ENCODE measurements at regions of chr1 and their contacts with region 1.

Region 1: GRCh38 chr1:175823406-175823805 is 80.0 kb upstream of the TNR start:
- DNase-seq: no peak
- H3K4me3 ChIP-seq: no peak overlapping the region
- H3K27ac ChIP-seq: no peak overlapping the region
- H3K4me1 ChIP-seq: no peaks in the 10 kb centered on the region
- H3K27me3 ChIP-seq: peaks cover 3% of the 10 kb centered on the region
- CTCF ChIP-seq: no peak

Region 2: DNA sequence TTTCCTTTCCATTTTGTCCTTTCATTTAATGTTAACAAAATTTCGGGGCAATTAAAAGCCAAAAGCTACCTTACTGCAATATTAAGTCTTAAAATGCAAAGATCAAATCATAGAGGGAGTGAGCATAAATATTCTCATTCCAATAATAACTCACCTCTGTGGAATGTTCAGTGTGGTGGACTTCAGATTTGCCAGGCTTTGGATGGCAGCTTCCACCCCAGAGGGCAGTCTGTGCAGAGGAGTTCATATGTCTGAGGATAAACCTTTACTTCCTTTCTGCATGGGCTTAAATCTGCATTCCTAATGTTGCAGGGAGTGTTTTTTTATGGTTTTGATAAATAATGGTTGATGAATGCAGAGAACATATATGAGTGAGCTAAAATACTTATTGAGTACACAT is 647.2 kb before region 1 on chr1:
- CTCF ChIA-PET with region 1: interaction called, 14 read pairs
- POLR2A ChIA-PET with region 1: no interaction called
- intact Hi-C with region 1: no loop called
- DNase-seq: no peak
- H3K4me3 ChIP-seq: no peak overlapping the region
- H3K27ac ChIP-seq: no peak overlapping the region
- H3K4me1 ChIP-seq: no peaks in the 10 kb centered on the region
- H3K27me3 ChIP-seq: peaks cover 3% of the 10 kb centered on the region
- CTCF ChIP-seq: no peak